Ovary (tissue), 10 donors: ENCODE measurements at regions of chr20 and their contacts with region 1.

Region 1: DNA sequence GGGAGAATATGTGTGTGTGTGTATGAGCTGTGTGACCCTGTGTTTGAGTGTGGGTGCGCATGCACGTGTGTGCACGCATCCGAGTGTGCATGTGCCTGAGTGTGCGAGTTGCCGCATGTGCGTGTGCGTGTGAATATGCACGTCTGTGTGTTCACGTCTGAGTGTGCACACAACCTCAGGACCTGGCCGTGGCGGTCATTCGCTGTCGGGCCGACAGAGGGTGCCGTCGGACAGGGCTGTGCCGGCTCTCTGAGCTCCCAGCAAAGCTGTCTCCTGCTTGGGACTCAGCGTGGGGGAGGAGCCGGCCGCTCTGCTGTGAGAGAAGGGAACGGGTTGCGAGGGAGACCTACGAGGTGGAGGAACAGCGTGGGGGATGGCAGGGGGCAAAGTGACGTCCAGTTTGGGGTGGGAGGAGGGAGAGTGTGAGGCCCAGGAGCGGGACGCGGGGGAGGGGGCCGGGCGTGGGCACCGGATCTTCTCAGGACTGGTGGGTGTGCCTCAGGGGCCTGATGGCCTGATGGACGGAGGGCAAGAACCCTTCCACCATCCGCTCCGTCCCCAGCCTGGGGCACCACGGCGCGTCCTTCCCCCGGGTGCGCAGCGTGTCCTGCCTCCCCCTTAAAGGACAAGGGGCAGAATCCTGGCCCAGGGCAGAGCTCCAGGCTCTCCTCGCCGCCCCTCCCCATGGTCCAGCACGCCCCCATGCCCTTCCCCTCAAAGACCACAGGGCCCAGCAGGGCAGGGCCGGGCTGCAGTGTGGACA is 19.9 kb downstream of the SLC17A9 start:
- DNase-seq: peak; percentile 81 to 90 (median 84)
- H3K4me3 ChIP-seq: no peak overlapping the region
- H3K27ac ChIP-seq: no peak overlapping the region
- H3K4me1 ChIP-seq: peaks cover 5% of the 10 kb centered on the region
- H3K27me3 ChIP-seq: no peaks in the 10 kb centered on the region
- CTCF ChIP-seq: peak; percentile 78 to 87 (median 81)
- EP300 ChIP-seq: no peak
- POLR2A ChIP-seq: no peak

Region 2: DNA sequence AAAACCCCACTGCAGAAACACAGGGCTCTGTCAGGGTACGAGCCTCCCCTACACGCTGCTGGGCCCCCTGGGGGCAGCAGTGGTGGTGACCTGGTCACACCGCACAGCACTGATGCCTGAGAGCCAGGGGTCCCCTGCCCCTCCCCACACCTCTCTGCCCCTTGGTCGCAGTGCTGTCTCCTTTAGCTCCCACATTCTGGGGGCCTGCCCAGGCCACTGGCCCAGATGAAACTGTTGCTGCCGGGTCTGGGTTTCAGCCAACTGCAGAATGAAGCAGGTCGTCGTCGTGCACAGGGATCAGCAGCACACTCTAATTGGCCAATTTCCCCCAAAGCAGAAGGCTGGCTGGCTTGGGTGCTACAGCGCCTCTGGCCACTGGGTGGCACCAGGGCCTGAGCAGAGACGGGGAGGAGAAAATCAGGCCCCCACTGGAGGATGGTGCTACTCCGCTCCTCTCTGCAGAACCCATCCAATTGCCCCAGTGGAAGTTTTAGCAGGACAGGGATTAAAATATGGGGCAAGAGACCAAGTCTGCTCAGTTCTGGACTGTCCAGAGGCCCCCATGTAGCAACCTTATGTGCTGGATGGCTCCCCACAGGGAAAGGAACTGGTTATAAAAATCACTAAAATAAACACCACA is 72.3 kb before region 1 on chr20:
- intact Hi-C with region 1: loop called in 1 of 4 experiments (anchors 2 kb)
- DNase-seq: peak; percentile 77 to 85 (median 82)
- H3K4me3 ChIP-seq: no peak overlapping the region
- H3K27ac ChIP-seq: no peak overlapping the region
- H3K4me1 ChIP-seq: peaks cover 3% of the 10 kb centered on the region
- H3K27me3 ChIP-seq: no peaks in the 10 kb centered on the region
- CTCF ChIP-seq: peak; percentile 65 to 91 (median 82)
- EP300 ChIP-seq: no peak
- POLR2A ChIP-seq: no peak

Region 3: GRCh38 chr20:63090682-63091579 is 118.5 kb after region 1 on chr20:
- intact Hi-C with region 1: no loop called
- DNase-seq: peak in 2 of 5 donors; percentile 4 to 25
- H3K4me3 ChIP-seq: no peak overlapping the region
- H3K27ac ChIP-seq: no peak overlapping the region
- H3K4me1 ChIP-seq: no peaks in the 10 kb centered on the region
- H3K27me3 ChIP-seq: no peaks in the 10 kb centered on the region
- CTCF ChIP-seq: no peak
- EP300 ChIP-seq: no peak
- POLR2A ChIP-seq: no peak